Ascending aorta (tissue), 2 donors: ENCODE measurements at regions of chr16 and their contacts with region 1.

Region 1: DNA sequence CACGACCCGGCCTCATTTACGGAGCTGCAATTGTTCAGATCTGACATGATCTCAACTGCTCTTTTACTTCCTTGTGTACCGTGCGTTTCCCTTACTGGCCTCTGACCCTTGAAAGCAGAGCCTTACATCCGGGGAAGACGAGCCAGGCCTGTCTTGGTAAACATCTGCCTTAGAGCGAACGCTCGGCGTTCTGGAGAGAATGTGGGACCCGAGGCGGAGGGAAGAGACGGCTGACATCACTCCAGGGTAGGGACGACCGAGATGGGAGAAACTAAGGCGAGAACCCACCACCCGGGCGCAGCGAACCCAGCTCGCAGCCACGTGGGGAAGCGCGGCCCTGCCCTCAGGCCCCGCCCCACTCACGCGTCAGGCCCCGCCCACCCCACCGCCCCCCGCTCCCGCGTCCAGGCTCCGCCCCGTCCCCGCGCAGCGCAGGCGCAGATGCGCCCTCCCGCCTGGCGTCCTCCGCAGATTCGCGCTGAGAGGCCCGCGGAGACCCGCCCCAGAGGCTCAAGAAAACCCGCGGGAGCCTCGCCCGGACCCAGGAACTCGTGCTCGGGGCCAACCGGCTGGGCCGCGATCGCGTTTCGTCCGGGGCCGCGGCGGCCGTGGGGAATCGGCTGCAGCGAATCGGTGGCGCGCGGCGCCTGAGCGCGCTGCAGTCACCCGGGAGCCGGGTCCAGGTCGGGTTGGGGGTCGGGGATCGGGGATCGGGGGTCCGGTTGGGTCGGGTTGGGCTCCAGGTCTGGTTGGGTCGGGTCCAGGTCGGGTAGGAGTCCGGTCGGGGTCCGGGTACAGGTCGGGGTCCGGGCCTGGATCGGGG is at the start of gene TELO2:
- DNase-seq: peak in 1 of 2 donors; percentile 81
- H3K4me3 ChIP-seq: peak within 1 kb of the TSS; percentile 78 to 93
- H3K27ac ChIP-seq: peak within 1 kb of the TSS; percentile 76 to 93
- H3K4me1 ChIP-seq: peaks cover 3 to 9% of the 10 kb centered on the region in 2 donors
- H3K27me3 ChIP-seq: no peaks in the 10 kb centered on the region
- CTCF ChIP-seq: no peak
- total RNA-seq, gene TELO2: 110 TPM

Region 2: GRCh38 chr16:1474796-1475551 is 18.2 kb before region 1 on chr16 and contains the start of gene CLCN7:
- intact Hi-C with region 1: loop called (anchors 1 kb)
- DNase-seq: peak; percentile 62 to 94
- H3K4me3 ChIP-seq: peak within 1 kb of the TSS; percentile 88 to 89
- H3K27ac ChIP-seq: peak within 1 kb of the TSS; percentile 83 to 86
- H3K4me1 ChIP-seq: peaks cover 0 to 18% of the 10 kb centered on the region in 2 donors
- H3K27me3 ChIP-seq: no peaks in the 10 kb centered on the region
- CTCF ChIP-seq: no peak
- total RNA-seq, gene CLCN7: 108 TPM

Region 3: GRCh38 chr16:1509307-1510221 is 16.4 kb after region 1 on chr16:
- intact Hi-C with region 1: loop called (anchors 2 kb)
- DNase-seq: peak; percentile 51 to 87
- H3K4me3 ChIP-seq: peak overlapping the region in 1 of 2 donors; percentile 51
- H3K27ac ChIP-seq: peak overlapping the region; percentile 83 to 92
- H3K4me1 ChIP-seq: peaks cover 13 to 19% of the 10 kb centered on the region in 2 donors
- H3K27me3 ChIP-seq: no peaks in the 10 kb centered on the region
- CTCF ChIP-seq: no peak

Region 4: DNA sequence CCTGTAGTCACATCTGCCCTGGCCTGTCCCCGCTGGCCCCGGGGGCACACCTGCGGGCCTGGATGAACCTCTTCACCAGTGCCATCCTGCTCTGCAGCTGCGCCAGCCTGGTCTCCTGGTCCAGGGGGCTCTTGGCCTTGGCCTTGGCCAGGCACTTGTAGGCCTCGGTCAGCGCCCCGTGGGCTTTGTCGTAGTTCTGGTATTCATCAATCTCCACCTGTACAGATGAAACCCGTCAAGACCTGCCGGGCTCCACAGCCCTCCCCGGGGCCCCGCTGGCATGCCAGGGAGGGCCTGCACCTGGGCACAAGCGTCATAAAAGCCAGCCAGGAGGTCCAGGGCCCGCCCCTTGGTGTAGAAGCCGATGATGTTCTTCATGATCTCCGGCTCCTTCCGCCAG is 26.7 kb after region 1 on chr16:
- intact Hi-C with region 1: no loop called
- DNase-seq: no peak
- H3K4me3 ChIP-seq: no peak overlapping the region
- H3K27ac ChIP-seq: no peak overlapping the region
- H3K4me1 ChIP-seq: no peaks in the 10 kb centered on the region
- H3K27me3 ChIP-seq: no peaks in the 10 kb centered on the region
- CTCF ChIP-seq: no peak

Region 5: GRCh38 chr16:1533443-1533951 is 40.4 kb after region 1 on chr16 and contains the start of gene TMEM204:
- intact Hi-C with region 1: loop called (anchors 5 kb)
- DNase-seq: peak in 1 of 2 donors; percentile 86
- H3K4me3 ChIP-seq: peak within 1 kb of the TSS; percentile 68 to 80
- H3K27ac ChIP-seq: peak within 1 kb of the TSS; percentile 90 to 98
- H3K4me1 ChIP-seq: peaks cover 17 to 54% of the 10 kb centered on the region in 2 donors
- H3K27me3 ChIP-seq: no peaks in the 10 kb centered on the region
- CTCF ChIP-seq: no peak
- total RNA-seq, gene TMEM204: 145 TPM

Region 6: DNA sequence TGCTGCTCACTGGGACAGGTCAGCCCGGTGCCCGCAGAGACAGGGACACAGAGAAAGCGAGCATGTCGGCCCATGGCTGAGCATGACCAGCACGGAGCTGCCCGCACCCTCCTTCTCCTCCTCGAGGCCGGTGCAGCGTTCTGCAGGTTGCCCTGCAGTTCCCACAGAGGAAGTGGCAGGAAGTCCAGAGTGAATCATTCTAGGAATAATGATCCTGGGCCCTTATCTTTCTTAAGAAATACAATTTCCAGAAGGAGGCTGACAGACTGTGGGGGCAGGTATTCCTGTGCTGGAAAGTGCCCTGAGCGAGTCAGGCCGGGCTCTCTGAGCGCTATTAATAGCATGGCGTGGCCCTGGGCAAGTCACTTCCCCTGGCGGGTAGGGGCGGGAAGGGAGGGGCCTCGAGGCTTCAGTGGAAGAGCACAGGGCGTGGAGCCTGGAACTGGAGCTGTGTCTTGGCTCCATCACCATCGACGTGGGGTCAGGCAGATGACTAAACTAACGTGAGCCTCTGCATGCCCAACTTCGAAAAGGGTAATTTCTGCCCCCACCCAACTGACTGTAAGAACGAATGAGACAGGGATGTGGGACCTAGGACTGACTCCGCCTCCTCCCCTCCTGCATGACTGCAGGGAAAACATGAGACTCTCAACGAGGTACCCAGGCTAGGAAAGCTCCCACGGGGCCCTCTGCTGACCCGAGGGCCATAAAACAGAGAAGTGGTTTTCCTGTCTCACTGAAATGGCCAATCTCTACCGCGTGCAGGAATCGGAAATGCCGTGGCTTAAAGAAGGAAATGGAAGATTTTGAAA is 50.2 kb after region 1 on chr16:
- intact Hi-C with region 1: loop called (anchors 2 kb)
- DNase-seq: peak; percentile 49 to 88
- H3K4me3 ChIP-seq: peak overlapping the region in 1 of 2 donors; percentile 21
- H3K27ac ChIP-seq: peak overlapping the region; percentile 89 to 92
- H3K4me1 ChIP-seq: peaks cover 22 to 50% of the 10 kb centered on the region in 2 donors
- H3K27me3 ChIP-seq: no peaks in the 10 kb centered on the region
- CTCF ChIP-seq: no peak